CD8-positive, alpha-beta memory T cell (primary cell): ENCODE measurements at regions of chr7 and their contacts with region 1.

Region 1: GRCh38 chr7:100705753-100706671 is at the start of gene POP7:
- DNase-seq: peak; percentile 96 to 99 (median 98)
- H3K4me3 ChIP-seq: peak within 1 kb of the TSS; percentile 93
- H3K4me3 Mint-ChIP-seq: peak within 1 kb of the TSS; percentile 88 to 98 (median 96)
- H3K27ac ChIP-seq: peak within 1 kb of the TSS; percentile 81
- H3K27ac Mint-ChIP-seq: peak within 1 kb of the TSS; percentile 86 to 97 (median 94)
- H3K4me1 ChIP-seq: peaks cover 14% of the 10 kb centered on the region
- H3K4me1 Mint-ChIP-seq: peaks cover 12 to 19% (median 15%) of the 10 kb centered on the region in 3 donors
- H3K27me3 ChIP-seq: no peaks in the 10 kb centered on the region
- H3K27me3 Mint-ChIP-seq: peaks cover 2 to 3% of the 10 kb centered on the region in 2 donors
- total RNA-seq, gene POP7: 79.7 to 83.3 TPM

Region 2: GRCh38 chr7:100493476-100494264 is 212.3 kb before region 1 on chr7:
- CTCF ChIA-PET with region 1: interaction called, 12 read pairs
- POLR2A ChIA-PET with region 1: no interaction called
- DNase-seq: peak in 4 of 5 donors; percentile 18 to 64 (median 42)
- H3K4me3 ChIP-seq: peak overlapping the region; percentile 32
- H3K4me3 Mint-ChIP-seq: peak overlapping the region; percentile 9 to 77 (median 70)
- H3K27ac ChIP-seq: no peak overlapping the region
- H3K27ac Mint-ChIP-seq: peak overlapping the region in 1 of 8 donors; percentile 29
- H3K4me1 ChIP-seq: no peaks in the 10 kb centered on the region
- H3K4me1 Mint-ChIP-seq: peaks cover 6 to 22% (median 9%) of the 10 kb centered on the region in 3 donors
- H3K27me3 ChIP-seq: no peaks in the 10 kb centered on the region
- H3K27me3 Mint-ChIP-seq: peaks cover 2 to 3% of the 10 kb centered on the region in 2 donors

Region 3: DNA sequence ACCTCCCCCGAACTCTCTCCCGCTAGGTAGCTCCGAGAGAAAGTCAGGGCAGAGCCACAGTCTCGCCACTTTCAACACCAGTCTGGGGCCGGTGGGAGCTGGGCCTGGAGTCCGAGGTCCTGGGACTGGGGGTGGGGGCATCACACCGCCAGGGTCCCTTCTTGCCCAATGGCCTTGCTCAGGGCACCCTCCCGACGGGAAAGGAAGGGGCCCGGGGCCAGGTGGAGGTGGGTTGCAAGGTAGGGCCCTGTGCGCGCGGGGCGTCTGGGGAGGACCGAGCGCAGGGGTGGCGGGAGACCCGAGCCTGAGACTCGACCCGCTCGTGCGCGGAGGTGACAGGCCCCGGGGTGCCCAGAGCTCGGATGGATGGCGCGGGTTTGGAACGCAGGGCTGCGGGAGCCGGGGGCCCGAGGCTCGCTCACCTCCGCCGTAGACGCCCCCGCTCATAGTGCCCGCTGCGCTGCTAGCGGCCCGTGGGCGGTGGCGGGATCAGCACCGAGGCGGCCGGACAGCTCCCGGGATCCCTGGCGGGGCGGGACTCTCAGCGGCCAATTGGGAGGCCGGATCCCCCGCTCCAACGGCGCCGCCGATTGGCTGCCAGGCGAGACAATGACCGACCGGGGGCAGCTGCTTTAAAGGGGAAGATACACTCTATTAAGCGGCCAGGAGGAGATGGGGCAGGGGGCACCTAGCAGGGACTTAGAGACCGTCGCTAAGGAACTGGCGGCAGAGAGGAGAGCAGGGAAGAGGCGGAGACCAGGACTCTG is 49.9 kb before region 1 on chr7 and contains the start of gene ACTL6B:
- CTCF ChIA-PET with region 1: no interaction called
- POLR2A ChIA-PET with region 1: no interaction called
- DNase-seq: peak; percentile 32 to 63 (median 43)
- H3K4me3 ChIP-seq: no peak within 1 kb of the TSS
- H3K4me3 Mint-ChIP-seq: no peak within 1 kb of the TSS
- H3K27ac ChIP-seq: no peak within 1 kb of the TSS
- H3K27ac Mint-ChIP-seq: no peak within 1 kb of the TSS
- H3K4me1 ChIP-seq: no peaks in the 10 kb centered on the region
- H3K4me1 Mint-ChIP-seq: peaks cover 0 to 6% (median 2%) of the 10 kb centered on the region in 3 donors
- H3K27me3 ChIP-seq: peaks cover 21% of the 10 kb centered on the region
- H3K27me3 Mint-ChIP-seq: peaks cover 56 to 59% of the 10 kb centered on the region in 2 donors
- total RNA-seq, gene ACTL6B: not detected

Region 4: GRCh38 chr7:100673300-100673941 is 32.6 kb before region 1 on chr7 and contains the start of gene GNB2:
- CTCF ChIA-PET with region 1: interaction called, 18 read pairs
- POLR2A ChIA-PET with region 1: interaction called, 11 read pairs
- DNase-seq: peak; percentile 93 to 98 (median 96)
- H3K4me3 ChIP-seq: peak within 1 kb of the TSS; percentile 84
- H3K4me3 Mint-ChIP-seq: peak within 1 kb of the TSS; percentile 92 to 98 (median 95)
- H3K27ac ChIP-seq: peak within 1 kb of the TSS; percentile 89
- H3K27ac Mint-ChIP-seq: peak within 1 kb of the TSS; percentile 95 to 98 (median 96)
- H3K4me1 ChIP-seq: peaks cover 15% of the 10 kb centered on the region
- H3K4me1 Mint-ChIP-seq: peaks cover 10 to 23% (median 12%) of the 10 kb centered on the region in 3 donors
- H3K27me3 ChIP-seq: no peaks in the 10 kb centered on the region
- H3K27me3 Mint-ChIP-seq: peaks cover 0 to 6% of the 10 kb centered on the region in 2 donors
- total RNA-seq, gene GNB2: 253 to 262 TPM

Region 5: GRCh38 chr7:100691676-100692577 is 14.1 kb before region 1 on chr7:
- CTCF ChIA-PET with region 1: interaction called, 120 read pairs
- POLR2A ChIA-PET with region 1: interaction called, 16 read pairs
- DNase-seq: peak; percentile 69 to 85 (median 71)
- H3K4me3 ChIP-seq: peak overlapping the region; percentile 81
- H3K4me3 Mint-ChIP-seq: peak overlapping the region; percentile 88 to 97 (median 94)
- H3K27ac ChIP-seq: no peak overlapping the region
- H3K27ac Mint-ChIP-seq: peak overlapping the region; percentile 15 to 95 (median 86)
- H3K4me1 ChIP-seq: peaks cover 26% of the 10 kb centered on the region
- H3K4me1 Mint-ChIP-seq: peaks cover 36 to 49% (median 39%) of the 10 kb centered on the region in 3 donors
- H3K27me3 ChIP-seq: no peaks in the 10 kb centered on the region
- H3K27me3 Mint-ChIP-seq: no peaks in the 10 kb centered on the region

Region 6: GRCh38 chr7:100852048-100852872 is 146.2 kb after region 1 on chr7 and contains the start of gene SLC12A9:
- CTCF ChIA-PET with region 1: interaction called, 43 read pairs
- POLR2A ChIA-PET with region 1: interaction called, 3 read pairs
- DNase-seq: peak; percentile 81 to 89 (median 84)
- H3K4me3 ChIP-seq: peak within 1 kb of the TSS; percentile 85
- H3K4me3 Mint-ChIP-seq: peak within 1 kb of the TSS; percentile 84 to 96 (median 90)
- H3K27ac ChIP-seq: peak within 1 kb of the TSS; percentile 64
- H3K27ac Mint-ChIP-seq: peak within 1 kb of the TSS; percentile 36 to 98 (median 90)
- H3K4me1 ChIP-seq: peaks cover 17% of the 10 kb centered on the region
- H3K4me1 Mint-ChIP-seq: peaks cover 15 to 33% (median 21%) of the 10 kb centered on the region in 3 donors
- H3K27me3 ChIP-seq: no peaks in the 10 kb centered on the region
- H3K27me3 Mint-ChIP-seq: no peaks in the 10 kb centered on the region
- total RNA-seq, gene SLC12A9: 24.7 to 29.1 TPM

Region 7: DNA sequence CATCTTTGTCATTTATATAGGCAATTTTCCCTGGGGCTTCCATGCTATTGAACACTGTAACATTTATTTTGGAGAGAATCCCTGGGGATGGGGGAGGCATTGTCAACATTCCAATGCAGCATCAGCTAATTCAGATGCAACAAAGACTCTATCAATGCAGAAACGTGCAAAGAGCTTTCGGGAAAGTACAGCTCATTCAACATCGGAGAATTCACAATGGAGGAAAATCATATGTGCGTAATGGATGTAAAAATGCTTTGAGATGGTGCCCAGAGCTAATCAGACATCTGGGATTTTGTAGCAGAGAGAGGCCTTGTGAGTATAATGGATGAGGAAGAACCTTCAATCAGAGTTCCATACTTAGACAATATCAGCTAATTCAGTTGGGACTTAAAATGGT is 567.2 kb after region 1 on chr7:
- CTCF ChIA-PET with region 1: no interaction called
- POLR2A ChIA-PET with region 1: no interaction called
- DNase-seq: no peak
- H3K4me3 ChIP-seq: no peak overlapping the region
- H3K4me3 Mint-ChIP-seq: no peak overlapping the region
- H3K27ac ChIP-seq: no peak overlapping the region
- H3K27ac Mint-ChIP-seq: no peak overlapping the region
- H3K4me1 ChIP-seq: no peaks in the 10 kb centered on the region
- H3K4me1 Mint-ChIP-seq: no peaks in the 10 kb centered on the region
- H3K27me3 ChIP-seq: no peaks in the 10 kb centered on the region
- H3K27me3 Mint-ChIP-seq: peaks cover 14 to 34% of the 10 kb centered on the region in 2 donors